ENCODE measurements at regions of chr16 and their contacts with region 1.

Region 1: GRCh38 chr16:53054670-53055485 is at the start of gene CHD9:
- DNase-seq: peak; percentile 87
- ATAC-seq: peak; percentile 84 to 92
- total RNA-seq, gene CHD9: 44.2 to 60.3 TPM

Region 2: DNA sequence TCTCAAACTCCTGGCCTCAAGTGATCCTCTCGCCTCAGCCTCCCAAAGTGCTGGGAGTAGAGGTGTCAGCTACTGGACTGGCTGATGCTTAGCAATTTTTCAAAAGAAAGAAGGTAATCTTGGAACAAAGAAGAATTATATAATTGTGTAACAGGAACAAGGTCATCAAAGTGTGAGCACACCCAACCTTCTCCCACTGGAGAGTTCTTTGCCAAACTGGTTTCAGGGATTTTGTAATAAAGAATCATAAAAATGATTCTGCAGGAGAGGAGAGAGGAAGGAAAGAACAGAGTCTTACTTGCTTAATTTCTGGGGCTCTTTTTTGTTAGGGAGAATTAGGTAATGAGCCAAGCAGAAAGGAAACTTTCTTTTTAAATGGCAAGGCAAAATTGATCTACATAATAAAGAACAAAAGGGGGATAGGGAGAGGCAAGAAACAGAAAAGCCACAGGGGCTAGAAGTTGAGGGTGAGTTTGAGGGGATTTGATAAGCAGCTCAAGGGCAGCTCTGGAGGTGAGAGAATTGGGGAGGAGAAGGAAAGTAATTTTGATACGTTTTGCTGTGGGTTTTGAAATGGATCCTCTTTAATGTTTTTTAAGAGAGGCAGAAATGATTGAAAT is 23.4 kb before region 1 on chr16:
- intact Hi-C with region 1: no loop called
- DNase-seq: no peak
- ATAC-seq: peak in 1 of 2 donors; percentile 66

Region 3: GRCh38 chr16:53091466-53092211 is 36.8 kb after region 1 on chr16:
- intact Hi-C with region 1: loop called in 1 of 2 experiments (anchors 2 kb)
- DNase-seq: peak; percentile 73
- ATAC-seq: peak; percentile 59 to 68

Region 4: DNA sequence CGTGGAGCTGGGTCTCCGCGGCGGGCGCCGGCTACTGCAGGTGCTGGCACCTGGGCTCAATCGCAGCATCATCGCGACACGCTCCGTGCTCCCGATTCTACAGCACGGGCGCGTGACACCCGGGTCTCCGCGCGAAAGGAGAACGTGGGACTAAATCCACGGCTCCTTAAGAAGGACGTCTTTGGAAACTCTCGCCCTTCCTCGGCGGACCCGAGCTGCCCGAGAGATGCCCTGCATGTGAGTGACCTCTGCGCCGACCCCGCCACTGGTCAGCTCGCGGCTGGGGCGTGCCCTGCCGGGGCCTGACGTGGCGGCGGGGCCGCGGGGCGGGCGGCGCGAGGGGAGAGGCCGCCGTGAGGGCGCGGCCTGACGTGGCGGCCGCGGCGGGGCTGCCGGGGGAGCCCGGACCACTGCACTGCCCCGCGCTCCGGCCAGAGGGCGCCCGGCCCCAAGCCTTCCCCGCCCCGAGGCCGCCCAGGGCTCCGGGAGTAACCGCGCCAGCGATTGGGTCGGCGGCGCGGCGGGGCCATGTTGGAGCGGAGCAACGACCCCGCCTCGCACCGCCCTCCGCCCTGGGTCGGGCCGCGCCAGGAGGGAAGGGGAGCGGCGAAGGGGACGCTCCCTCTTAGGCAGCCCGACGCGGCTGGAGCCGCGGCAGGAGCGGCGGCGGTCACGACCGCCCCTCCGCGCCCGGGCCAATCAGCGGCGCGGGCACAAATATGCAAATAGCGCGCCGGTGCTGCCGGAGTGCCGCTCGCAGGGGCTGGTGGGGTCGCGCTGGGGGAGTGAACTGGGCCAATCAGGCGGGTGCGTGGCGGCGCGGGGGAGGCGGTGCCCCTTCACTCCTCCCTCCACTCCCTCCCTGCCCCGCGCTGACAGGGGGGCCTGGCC is 75.5 kb after region 1 on chr16:
- intact Hi-C with region 1: loop called in 1 of 2 experiments (anchors 10 kb)
- DNase-seq: peak; percentile 97
- ATAC-seq: peak; percentile 94 to 95

Region 5: GRCh38 chr16:53159781-53160436 is 105.0 kb after region 1 on chr16:
- intact Hi-C with region 1: loop called (anchors 5 to 10 kb)
- DNase-seq: no peak
- ATAC-seq: peak; percentile 57 to 74

Region 6: GRCh38 chr16:53207810-53208752 is 153.2 kb after region 1 on chr16:
- intact Hi-C with region 1: loop called (anchors 2 to 10 kb)
- DNase-seq: peak; percentile 27
- ATAC-seq: peak; percentile 97